Ascending aorta (tissue), 2 donors: ENCODE measurements at regions of chr13 and their contacts with region 1.

Region 1: GRCh38 chr13:97975848-97976609 is 22.6 kb downstream of the IPO5 start:
- DNase-seq: peak; percentile 58 to 94
- H3K4me3 ChIP-seq: peak overlapping the region; percentile 64 to 80
- H3K27ac ChIP-seq: peak overlapping the region; percentile 92 to 99
- H3K4me1 ChIP-seq: peaks cover 0 to 16% of the 10 kb centered on the region in 2 donors
- H3K27me3 ChIP-seq: no peaks in the 10 kb centered on the region
- CTCF ChIP-seq: no peak

Region 2: GRCh38 chr13:97109841-97110492 is 866.1 kb before region 1 on chr13:
- intact Hi-C with region 1: loop called (anchors 5 kb)
- DNase-seq: peak; percentile 66 to 96
- H3K4me3 ChIP-seq: peak overlapping the region in 1 of 2 donors; percentile 42
- H3K27ac ChIP-seq: peak overlapping the region; percentile 63 to 69
- H3K4me1 ChIP-seq: peaks cover 8 to 70% of the 10 kb centered on the region in 2 donors
- H3K27me3 ChIP-seq: no peaks in the 10 kb centered on the region
- CTCF ChIP-seq: peak; percentile 95 to 97 (median 96)

Region 3: DNA sequence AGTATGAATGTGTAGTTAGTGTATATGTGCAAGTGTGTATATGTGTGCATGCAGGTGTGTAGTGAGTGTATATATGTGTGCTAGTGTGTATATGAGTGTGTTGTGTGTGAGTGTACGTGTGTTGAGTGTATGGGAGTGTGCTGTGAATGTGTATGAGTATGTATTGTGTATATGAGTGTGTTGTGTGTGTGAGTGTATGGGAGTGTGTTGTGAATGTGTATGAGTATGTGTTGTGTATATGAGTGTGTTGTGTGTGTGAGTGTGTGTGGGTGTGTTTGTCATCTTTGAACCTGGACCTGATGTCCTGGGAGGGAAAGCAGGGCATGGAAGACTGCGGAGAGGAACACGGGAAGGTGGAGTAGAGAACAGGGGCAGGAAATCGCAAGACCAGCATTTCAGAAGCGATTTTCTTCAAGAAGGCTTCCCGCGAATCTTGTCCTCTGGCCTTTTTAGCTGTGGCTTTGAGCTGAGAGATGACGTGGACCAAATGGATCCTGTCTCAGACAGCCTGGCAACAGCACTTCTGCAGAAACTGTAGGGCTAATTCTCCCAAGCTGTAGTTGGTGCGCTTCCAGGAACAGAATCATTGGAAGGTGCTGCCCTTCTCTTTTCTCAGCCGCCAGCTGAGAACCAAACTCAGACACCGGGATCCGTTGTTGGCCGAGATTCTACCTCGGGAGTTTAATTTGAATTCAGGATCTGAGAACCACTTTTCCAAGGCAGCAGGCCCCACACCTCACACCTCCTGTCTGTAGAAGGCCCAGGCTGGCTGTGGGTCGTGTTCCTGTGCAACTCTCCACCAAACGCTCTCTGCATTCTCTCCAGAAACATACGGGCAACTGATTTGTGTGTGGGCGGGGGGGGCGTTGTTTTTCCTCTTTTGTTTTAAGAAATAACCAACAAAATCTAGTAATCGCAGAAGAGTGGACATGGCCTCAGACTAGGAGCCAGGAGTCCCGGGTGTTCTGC is 636.7 kb before region 1 on chr13:
- intact Hi-C with region 1: loop called (anchors 5 kb)
- DNase-seq: peak in 1 of 2 donors; percentile 85
- H3K4me3 ChIP-seq: peak overlapping the region in 1 of 2 donors; percentile 41
- H3K27ac ChIP-seq: peak overlapping the region; percentile 79 to 83
- H3K4me1 ChIP-seq: peaks cover 0 to 27% of the 10 kb centered on the region in 2 donors
- H3K27me3 ChIP-seq: no peaks in the 10 kb centered on the region
- CTCF ChIP-seq: no peak

Region 4: GRCh38 chr13:98454389-98454881 is 478.4 kb after region 1 on chr13:
- intact Hi-C with region 1: loop called (anchors 5 kb)
- DNase-seq: no peak
- H3K4me3 ChIP-seq: no peak overlapping the region
- H3K27ac ChIP-seq: peak overlapping the region; percentile 62 to 63
- H3K4me1 ChIP-seq: peaks cover 2 to 26% of the 10 kb centered on the region in 2 donors
- H3K27me3 ChIP-seq: no peaks in the 10 kb centered on the region
- CTCF ChIP-seq: no peak

Region 5: GRCh38 chr13:99087096-99087953 is 1111.3 kb after region 1 on chr13:
- intact Hi-C with region 1: loop called (anchors 5 kb)
- DNase-seq: peak; percentile 33 to 93
- H3K4me3 ChIP-seq: peak overlapping the region; percentile 75 to 93
- H3K27ac ChIP-seq: peak overlapping the region; percentile 90 to 92
- H3K4me1 ChIP-seq: peaks cover 0 to 8% of the 10 kb centered on the region in 2 donors
- H3K27me3 ChIP-seq: no peaks in the 10 kb centered on the region
- CTCF ChIP-seq: peak in 2 of 3 experiments; percentile 16 to 21